GM12878 (cell line): ENCODE measurements at regions of chrX and their contacts with region 1.

Region 1: GRCh38 chrX:63488546-63489373 is 137.6 kb upstream of the SPIN4 start:
- DNase-seq: no peak
- ATAC-seq: no peak
- H3K4me3 ChIP-seq: no peak overlapping the region
- H3K27ac ChIP-seq: no peak overlapping the region
- H3K4me1 ChIP-seq: no peaks in the 10 kb centered on the region
- H3K27me3 ChIP-seq: no peaks in the 10 kb centered on the region
- CTCF ChIP-seq: no peak
- EP300 ChIP-seq: no peak
- POLR2A ChIP-seq: no peak
- RAD21 ChIP-seq: no peak

Region 2: DNA sequence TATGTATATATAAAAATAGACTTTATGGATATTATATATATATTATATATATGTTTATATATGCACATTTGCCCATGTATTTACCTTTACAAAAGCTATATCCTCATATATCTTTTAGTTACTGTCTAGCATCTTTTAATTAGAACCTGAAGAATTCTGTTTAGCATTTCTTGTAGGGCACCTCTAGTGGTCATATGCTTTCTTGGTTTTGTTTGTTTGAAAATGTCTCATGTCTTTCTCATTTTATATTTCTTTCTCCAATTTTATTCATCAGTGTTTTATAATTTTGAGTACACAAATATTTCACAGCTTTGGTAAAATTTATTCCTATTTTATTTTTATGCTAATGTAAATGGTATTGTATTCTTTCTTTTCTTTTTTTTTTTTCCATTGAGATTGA is 67.3 kb before region 1 on chrX:
- CTCF ChIA-PET with region 1: interaction called, 5 read pairs
- POLR2A ChIA-PET with region 1: no interaction called
- RAD21 ChIA-PET with region 1: no interaction called
- SMC1A ChIA-PET with region 1: no interaction called
- in situ Hi-C with region 1: no loop called
- intact Hi-C with region 1: loop called (anchors 10 kb)
- DNase-seq: no peak
- ATAC-seq: no peak
- H3K4me3 ChIP-seq: no peak overlapping the region
- H3K27ac ChIP-seq: no peak overlapping the region
- H3K4me1 ChIP-seq: no peaks in the 10 kb centered on the region
- H3K27me3 ChIP-seq: no peaks in the 10 kb centered on the region
- CTCF ChIP-seq: no peak
- EP300 ChIP-seq: no peak
- POLR2A ChIP-seq: no peak
- RAD21 ChIP-seq: no peak

Region 3: DNA sequence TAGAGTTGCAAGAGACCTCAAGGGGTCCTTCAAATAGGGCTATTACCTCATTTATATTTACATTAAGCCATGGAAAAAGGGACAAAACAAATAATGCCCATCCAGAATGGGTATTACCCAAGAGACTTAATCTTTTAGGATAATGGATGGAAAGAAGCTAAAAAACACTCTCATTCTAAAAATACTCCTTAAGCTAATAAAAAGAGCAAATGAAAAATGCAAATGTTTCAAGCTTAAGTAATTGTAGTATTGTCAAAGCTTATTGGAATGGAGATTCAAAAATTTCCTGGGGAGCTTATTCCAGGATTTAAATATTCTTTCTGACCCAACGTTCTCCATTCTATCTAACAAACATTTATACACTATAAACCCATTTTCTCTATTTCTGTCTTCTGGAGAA is 29.8 kb before region 1 on chrX:
- CTCF ChIA-PET with region 1: no interaction called
- POLR2A ChIA-PET with region 1: no interaction called
- RAD21 ChIA-PET with region 1: no interaction called
- SMC1A ChIA-PET with region 1: no interaction called
- in situ Hi-C with region 1: no loop called
- intact Hi-C with region 1: no loop called
- DNase-seq: no peak
- ATAC-seq: no peak
- H3K4me3 ChIP-seq: no peak overlapping the region
- H3K27ac ChIP-seq: no peak overlapping the region
- H3K4me1 ChIP-seq: no peaks in the 10 kb centered on the region
- H3K27me3 ChIP-seq: no peaks in the 10 kb centered on the region
- CTCF ChIP-seq: no peak
- EP300 ChIP-seq: no peak
- POLR2A ChIP-seq: no peak
- RAD21 ChIP-seq: no peak

Region 4: DNA sequence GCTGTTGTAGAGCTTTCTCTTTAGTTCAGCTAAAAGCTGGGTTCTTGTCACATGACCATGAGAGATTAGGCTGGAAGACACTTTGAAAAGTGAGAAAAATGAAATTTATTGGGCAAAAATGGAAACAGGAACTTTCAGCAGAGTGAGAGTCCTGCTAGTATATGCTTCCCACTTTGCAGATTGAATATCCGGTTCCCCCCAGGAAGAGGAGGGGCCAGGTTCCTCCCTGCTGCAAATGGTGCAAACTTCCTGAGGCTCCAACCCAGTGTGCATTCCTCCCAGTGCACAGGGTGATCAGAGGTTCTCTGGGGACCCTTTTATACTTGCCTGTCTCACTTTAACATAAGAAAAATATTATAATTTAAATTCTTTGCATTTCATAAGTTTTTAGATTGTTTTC is 17.8 kb before region 1 on chrX:
- CTCF ChIA-PET with region 1: no interaction called
- POLR2A ChIA-PET with region 1: no interaction called
- RAD21 ChIA-PET with region 1: no interaction called
- SMC1A ChIA-PET with region 1: no interaction called
- in situ Hi-C with region 1: no loop called
- intact Hi-C with region 1: no loop called
- DNase-seq: no peak
- ATAC-seq: no peak
- H3K4me3 ChIP-seq: no peak overlapping the region
- H3K27ac ChIP-seq: no peak overlapping the region
- H3K4me1 ChIP-seq: no peaks in the 10 kb centered on the region
- H3K27me3 ChIP-seq: no peaks in the 10 kb centered on the region
- CTCF ChIP-seq: no peak
- EP300 ChIP-seq: no peak
- POLR2A ChIP-seq: no peak
- RAD21 ChIP-seq: no peak

Region 5: DNA sequence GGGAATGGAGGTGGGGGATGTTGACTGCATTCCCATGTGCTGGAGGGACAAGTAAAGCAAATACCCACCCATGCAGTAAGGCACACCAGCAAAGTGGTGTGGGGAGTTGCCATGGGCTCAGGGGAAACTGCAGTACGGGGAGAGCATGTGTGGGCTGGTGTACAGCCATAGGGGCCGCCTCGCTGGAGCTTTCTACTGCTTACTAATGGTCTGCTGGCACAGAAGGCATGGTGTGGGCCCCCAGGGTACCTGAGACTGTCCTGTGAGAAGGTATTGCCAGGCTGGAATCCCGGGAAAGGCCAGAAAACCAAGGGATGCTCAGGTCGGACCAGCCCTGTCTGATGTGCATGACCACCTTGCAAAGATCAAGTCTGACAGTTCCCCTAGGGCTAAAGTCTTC is 97.2 kb after region 1 on chrX:
- CTCF ChIA-PET with region 1: no interaction called
- POLR2A ChIA-PET with region 1: no interaction called
- RAD21 ChIA-PET with region 1: no interaction called
- SMC1A ChIA-PET with region 1: no interaction called
- in situ Hi-C with region 1: no loop called
- intact Hi-C with region 1: no loop called
- DNase-seq: no peak
- ATAC-seq: no peak
- H3K4me3 ChIP-seq: no peak overlapping the region
- H3K27ac ChIP-seq: no peak overlapping the region
- H3K4me1 ChIP-seq: no peaks in the 10 kb centered on the region
- H3K27me3 ChIP-seq: no peaks in the 10 kb centered on the region
- CTCF ChIP-seq: no peak
- EP300 ChIP-seq: no peak
- POLR2A ChIP-seq: no peak
- RAD21 ChIP-seq: no peak